Endothelial cell of umbilical vein (primary cell): ENCODE measurements at regions of chr3 and their contacts with region 1.

Region 1: DNA sequence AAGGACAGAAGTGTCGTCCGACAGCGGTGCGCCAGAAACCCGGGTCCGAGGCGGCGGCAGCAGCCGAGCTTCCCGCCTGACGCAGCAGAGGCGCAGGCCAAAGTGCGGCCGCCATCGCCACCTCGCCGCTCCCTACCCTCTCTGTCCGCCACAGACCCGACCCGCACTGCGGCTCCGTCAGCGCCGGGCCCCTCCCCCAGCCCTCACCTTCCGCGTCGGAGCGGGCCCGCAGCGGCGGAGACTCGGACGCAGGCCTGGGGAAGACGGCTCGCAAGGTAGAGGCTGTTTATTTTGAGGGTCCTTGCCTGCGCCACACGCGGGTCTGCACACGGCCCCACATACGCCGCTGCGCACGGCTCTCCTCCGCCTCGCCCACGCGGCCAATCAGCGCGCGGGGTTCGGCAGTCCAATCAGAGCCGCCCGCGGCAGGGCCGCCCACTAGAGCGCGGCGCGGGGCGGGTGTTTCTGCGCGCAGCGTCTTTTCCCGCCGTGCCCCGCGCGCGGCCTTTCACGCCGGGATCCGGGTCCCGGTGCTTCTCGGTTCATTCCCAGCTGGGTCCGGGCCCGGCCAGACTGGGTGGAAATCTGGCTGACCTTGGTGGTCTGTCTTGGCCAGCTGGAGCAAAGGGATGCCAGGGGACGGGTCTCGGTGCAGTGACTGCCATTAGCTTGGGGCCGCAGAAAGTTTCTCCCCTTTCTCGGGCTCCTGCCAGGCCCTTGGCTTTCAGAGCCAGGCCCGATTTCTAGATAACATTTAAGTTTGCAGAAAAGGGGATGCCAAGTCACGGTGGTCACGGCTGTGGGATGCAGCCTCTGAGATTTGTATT is at the start of gene CNBP:
- DNase-seq: peak; percentile 95
- H3K4me3 ChIP-seq: peak within 1 kb of the TSS; percentile 82 to 96 (median 88)
- H3K27ac ChIP-seq: peak within 1 kb of the TSS; percentile 87
- H3K4me1 ChIP-seq: peaks cover 37% of the 10 kb centered on the region
- H3K27me3 ChIP-seq: no peaks in the 10 kb centered on the region
- CTCF ChIP-seq: no peak
- POLR2A ChIP-seq: peak; percentile 96
- total RNA-seq, gene CNBP: 197 and 205 TPM in 2 replicates

Region 2: DNA sequence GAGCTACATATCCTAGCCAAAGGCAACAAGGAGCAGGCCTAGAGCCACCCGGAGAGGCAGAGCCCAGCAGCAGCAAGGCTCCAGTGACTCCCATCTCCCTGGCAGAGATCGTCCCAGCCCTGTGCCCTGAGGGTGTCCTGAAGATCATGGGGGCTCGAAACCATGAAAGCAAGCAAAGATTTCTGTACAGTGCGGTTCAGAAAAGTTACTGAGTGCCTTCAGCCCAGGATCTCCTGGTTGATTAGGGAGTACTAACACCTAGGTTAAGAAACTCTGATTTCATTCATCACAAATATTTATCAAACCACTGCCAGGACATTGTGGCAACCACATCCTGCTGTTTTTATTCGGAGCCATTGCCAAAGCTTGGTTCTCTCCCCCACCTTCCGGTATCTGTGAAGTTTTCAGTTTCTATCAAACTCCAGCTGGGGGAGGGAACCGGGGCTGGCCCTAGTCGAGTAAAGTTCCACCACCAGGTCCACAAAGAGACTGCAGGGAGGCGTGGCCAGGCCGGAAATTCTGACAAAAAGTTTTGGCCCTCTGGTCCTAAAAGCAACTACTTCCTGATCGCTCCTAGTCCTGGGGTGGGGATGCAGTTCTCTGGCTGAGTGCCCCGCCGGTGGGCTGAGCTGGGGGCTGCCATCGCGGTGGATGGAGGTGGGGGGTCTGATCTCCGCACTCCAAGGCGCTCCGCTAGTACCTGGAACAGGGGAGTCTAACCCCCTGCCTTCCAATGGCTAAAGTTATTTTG is 63.4 kb before region 1 on chr3:
- CTCF ChIA-PET with region 1: interaction called, 4 read pairs
- POLR2A ChIA-PET with region 1: interaction called, 4 read pairs
- dilution Hi-C with region 1: no loop called
- intact Hi-C with region 1: loop called (anchors 2 kb)
- DNase-seq: peak; percentile 87
- H3K4me3 ChIP-seq: peak overlapping the region; percentile 64 to 79 (median 66)
- H3K27ac ChIP-seq: peak overlapping the region; percentile 66
- H3K4me1 ChIP-seq: peaks cover 27% of the 10 kb centered on the region
- H3K27me3 ChIP-seq: no peaks in the 10 kb centered on the region
- CTCF ChIP-seq: peak in 1 of 2 donors; percentile 22
- POLR2A ChIP-seq: peak; percentile 79

Region 3: GRCh38 chr3:129160891-129161859 is 22.6 kb before region 1 on chr3 and contains the start of gene ISY1:
- CTCF ChIA-PET with region 1: interaction called, 12 read pairs
- POLR2A ChIA-PET with region 1: interaction called, 5 read pairs
- dilution Hi-C with region 1: no loop called
- intact Hi-C with region 1: loop called (anchors 1 kb)
- DNase-seq: peak; percentile 95
- H3K4me3 ChIP-seq: peak within 1 kb of the TSS; percentile 82 to 100 (median 99)
- H3K27ac ChIP-seq: peak within 1 kb of the TSS; percentile 86
- H3K4me1 ChIP-seq: peaks cover 19% of the 10 kb centered on the region
- H3K27me3 ChIP-seq: no peaks in the 10 kb centered on the region
- CTCF ChIP-seq: peak; percentile 88 to 93
- POLR2A ChIP-seq: peak; percentile 99
- total RNA-seq, gene ISY1: 50.6 and 59.4 TPM in 2 replicates

Region 4: DNA sequence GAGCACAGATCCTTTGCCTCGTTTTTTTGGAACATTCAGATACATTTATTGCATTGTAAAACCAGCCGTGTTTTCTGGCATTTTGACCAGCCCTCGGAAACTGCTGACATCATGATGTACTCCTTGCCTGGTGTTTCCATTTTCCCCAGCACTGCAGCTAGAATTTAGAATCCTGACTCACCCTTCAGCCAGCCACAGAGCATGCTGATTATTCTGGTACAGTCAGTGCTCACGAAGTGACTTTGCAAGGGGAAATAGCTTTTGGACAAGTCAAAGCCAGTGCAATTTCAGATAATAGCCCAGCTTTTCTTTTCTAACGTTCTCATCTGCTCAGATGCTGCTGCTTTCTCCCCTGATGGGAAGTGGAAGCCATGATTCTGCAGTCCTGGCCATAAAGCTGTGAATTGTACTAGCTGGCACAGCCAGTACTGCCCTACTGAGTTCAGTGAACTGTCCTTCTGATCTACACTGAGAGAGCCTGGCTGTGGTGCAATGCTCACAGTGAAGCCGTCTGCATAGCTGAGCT is 12.0 kb after region 1 on chr3:
- CTCF ChIA-PET with region 1: interaction called, 17 read pairs
- POLR2A ChIA-PET with region 1: interaction called, 7 read pairs
- dilution Hi-C with region 1: no loop called
- intact Hi-C with region 1: no loop called
- DNase-seq: peak; percentile 82
- H3K4me3 ChIP-seq: peak overlapping the region in 1 of 3 experiments; percentile 23
- H3K27ac ChIP-seq: peak overlapping the region; percentile 81
- H3K4me1 ChIP-seq: peaks cover 26% of the 10 kb centered on the region
- H3K27me3 ChIP-seq: no peaks in the 10 kb centered on the region
- CTCF ChIP-seq: no peak
- POLR2A ChIP-seq: no peak

Region 5: GRCh38 chr3:129224984-129225393 is 41.2 kb after region 1 on chr3:
- CTCF ChIA-PET with region 1: interaction called, 3 read pairs
- POLR2A ChIA-PET with region 1: no interaction called
- dilution Hi-C with region 1: no loop called
- intact Hi-C with region 1: loop called (anchors 1 kb)
- DNase-seq: peak; percentile 71
- H3K4me3 ChIP-seq: peak overlapping the region in 1 of 3 experiments; percentile 16
- H3K27ac ChIP-seq: peak overlapping the region; percentile 9
- H3K4me1 ChIP-seq: peaks cover 45% of the 10 kb centered on the region
- H3K27me3 ChIP-seq: no peaks in the 10 kb centered on the region
- CTCF ChIP-seq: no peak
- POLR2A ChIP-seq: no peak

Region 6: DNA sequence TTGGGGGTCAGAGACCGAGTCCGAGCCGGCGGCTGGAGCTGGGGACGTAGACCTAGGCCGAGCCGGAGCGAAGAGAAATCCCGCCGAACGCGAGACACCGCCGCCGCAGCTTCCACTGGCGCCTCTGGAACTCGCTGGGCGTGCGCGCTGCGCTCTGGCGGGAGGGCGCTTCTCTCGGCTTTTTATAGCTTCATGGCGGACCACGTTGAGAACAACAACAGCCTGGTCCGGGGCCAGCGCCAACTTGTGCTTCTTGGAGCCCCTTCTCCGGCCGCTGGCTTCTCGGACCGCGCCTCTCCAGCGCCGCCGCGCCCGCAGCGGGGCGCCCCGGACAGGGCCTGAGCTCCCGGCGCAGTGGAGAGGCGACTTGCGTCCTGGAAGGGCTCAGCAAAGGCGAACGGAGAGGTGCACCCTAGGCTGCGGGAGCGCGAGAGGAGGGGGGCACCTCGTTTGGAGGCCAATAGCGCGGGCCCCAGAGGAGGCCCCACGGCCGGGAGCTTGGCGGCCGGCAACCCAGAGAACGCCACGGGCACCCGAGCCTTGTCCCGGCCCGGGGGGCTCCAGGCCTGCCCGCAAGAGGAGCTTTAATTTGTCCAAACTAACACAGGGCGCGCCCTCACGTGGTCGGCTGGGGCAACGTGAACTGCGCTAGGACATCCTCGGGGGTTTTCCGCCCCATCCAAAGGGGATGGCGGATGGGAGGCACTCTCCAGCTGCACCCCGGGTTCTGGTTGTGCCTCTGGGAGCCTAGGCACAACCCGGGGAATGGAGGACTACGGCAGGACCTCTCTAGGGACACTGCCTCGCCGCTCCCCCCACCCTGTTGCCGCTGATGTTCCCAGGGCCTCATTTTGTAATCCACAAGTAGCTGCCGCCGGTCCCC is 132.6 kb after region 1 on chr3:
- CTCF ChIA-PET with region 1: no interaction called
- POLR2A ChIA-PET with region 1: no interaction called
- dilution Hi-C with region 1: no loop called
- intact Hi-C with region 1: loop called (anchors 5 kb)
- DNase-seq: peak; percentile 78
- H3K4me3 ChIP-seq: peak overlapping the region; percentile 51 to 90 (median 68)
- H3K27ac ChIP-seq: peak overlapping the region; percentile 76
- H3K4me1 ChIP-seq: peaks cover 4% of the 10 kb centered on the region
- H3K27me3 ChIP-seq: no peaks in the 10 kb centered on the region
- CTCF ChIP-seq: peak; percentile 52 to 63
- POLR2A ChIP-seq: peak; percentile 100